ENCODE measurements at regions of chr15 and their contacts with region 1.

Region 1: DNA sequence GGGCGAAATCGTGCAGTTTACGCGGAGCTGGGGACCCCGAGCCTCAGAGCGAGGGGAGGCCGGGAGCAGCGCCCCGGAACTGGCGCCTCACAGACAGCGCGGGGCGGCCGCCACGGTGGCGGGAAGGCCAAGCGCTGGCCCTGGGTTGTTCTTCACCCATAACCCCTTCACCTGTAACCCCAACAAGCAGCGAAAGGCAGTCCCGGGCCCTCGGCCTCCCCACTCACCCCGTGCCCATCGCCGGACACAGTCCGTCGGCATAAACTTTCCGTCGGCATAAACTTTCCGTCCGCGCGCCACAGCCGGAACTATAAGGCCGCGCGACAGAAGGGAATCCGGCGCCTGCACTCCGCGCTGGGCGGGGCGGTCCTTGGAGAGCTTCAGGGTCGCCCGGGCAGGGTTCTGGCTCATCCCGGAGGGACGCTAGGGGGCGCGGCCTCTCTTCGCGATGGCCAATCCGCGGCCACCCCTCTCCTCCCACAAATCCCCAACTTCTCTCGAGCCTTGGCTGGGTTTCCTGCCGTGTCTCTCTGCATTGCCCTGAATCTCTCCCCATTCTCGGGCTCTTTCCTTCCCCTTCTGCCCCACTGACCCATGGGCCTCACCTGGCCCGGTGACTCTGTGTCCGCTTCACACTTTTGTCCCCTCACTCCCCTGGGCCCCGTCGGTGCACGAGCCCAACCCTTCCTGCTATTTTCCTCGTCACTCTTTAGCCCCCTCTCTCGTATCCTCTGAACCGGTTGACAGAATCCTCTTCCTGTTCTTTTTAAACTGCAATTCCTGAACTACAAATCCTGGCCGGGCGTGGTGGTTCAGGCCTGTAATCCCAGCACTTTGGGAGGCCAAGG is at the start of gene INTS14:
- DNase-seq: peak; percentile 95 to 99 (median 98)

Region 2: GRCh38 chr15:66293419-66294156 is 682.5 kb after region 1 on chr15 and contains the start of gene DIS3L:
- intact Hi-C with region 1: loop called (anchors 10 kb)
- DNase-seq: peak in 40 of 42 donors; percentile 6 to 77 (median 54)

Measured in head of caudate nucleus (tissue), 42 donors.